PC-9 (cell line): ENCODE measurements at regions of chr3 and their contacts with region 1.

Region 1: DNA sequence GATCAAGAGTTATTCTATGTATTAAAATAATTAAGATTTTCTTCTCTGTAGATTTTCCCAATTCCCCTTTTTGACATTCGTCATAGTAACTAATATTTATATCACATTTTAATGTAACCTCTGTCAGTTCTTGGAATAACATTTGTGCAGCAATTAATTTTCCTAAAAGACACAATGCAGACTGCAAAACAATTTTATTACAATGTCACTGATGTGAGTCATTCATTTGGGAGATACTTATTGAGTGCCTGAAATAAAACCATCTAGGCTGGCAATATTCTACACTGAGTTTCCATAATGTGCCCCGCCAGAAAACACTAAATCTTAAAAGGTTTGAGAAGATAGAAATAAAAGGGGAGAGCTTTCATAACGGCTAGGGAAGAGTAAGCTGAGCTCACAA is 6.7 kb upstream of the USP13 start:
- DNase-seq: no peak
- H3K4me3 ChIP-seq: no peak overlapping the region
- H3K27ac ChIP-seq: no peak overlapping the region
- H3K4me1 ChIP-seq: peaks cover 15% of the 10 kb centered on the region
- H3K27me3 ChIP-seq: no peaks in the 10 kb centered on the region
- CTCF ChIP-seq: no peak

Region 2: DNA sequence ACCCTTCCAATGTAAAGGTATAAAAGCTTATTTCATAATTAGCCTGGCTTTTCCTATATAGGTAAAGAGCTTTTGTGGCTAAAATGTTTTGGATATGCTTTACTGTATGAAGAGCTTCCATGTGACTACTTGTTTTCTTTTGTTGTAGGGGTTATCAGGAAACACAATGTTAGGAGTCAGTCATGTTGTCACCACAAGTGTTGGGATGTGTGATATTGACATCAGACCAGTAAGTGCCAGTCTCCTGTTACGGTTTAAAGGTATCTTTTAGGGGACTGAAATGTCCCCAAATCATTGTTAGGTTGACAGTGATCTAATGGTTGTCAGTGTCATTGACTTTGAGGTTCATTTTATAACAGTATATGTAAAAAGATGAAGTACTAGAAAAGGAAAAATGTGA is 65.2 kb before region 1 on chr3:
- CTCF ChIA-PET with region 1: no interaction called
- POLR2A ChIA-PET with region 1: no interaction called
- intact Hi-C with region 1: no loop called
- DNase-seq: no peak
- H3K4me3 ChIP-seq: no peak overlapping the region
- H3K27ac ChIP-seq: no peak overlapping the region
- H3K4me1 ChIP-seq: no peaks in the 10 kb centered on the region
- H3K27me3 ChIP-seq: no peaks in the 10 kb centered on the region
- CTCF ChIP-seq: no peak

Region 3: DNA sequence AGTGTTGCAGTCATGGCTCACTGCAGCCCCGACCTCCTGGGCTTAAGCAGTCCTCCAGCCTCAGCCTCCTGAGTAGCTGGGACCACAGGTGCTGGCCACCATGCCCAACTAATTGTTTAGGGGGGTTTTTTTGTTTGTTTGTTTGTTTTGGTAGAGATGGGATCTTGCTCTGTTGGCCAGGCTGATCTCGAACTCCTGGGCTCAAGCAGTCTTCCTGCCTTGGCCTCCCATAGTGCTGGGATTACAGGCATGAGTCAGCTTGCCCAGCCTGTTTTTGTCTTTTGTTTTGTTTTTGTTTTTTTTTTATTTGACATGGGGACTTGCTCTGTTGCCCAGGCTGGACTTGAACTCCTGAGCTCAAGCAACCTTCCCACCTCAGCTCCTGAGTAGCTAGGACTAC is 24.2 kb before region 1 on chr3:
- CTCF ChIA-PET with region 1: interaction called, 4 read pairs
- POLR2A ChIA-PET with region 1: interaction called, 15 read pairs
- intact Hi-C with region 1: no loop called
- DNase-seq: no peak
- H3K4me3 ChIP-seq: no peak overlapping the region
- H3K27ac ChIP-seq: no peak overlapping the region
- H3K4me1 ChIP-seq: no peaks in the 10 kb centered on the region
- H3K27me3 ChIP-seq: no peaks in the 10 kb centered on the region
- CTCF ChIP-seq: no peak

Region 4: DNA sequence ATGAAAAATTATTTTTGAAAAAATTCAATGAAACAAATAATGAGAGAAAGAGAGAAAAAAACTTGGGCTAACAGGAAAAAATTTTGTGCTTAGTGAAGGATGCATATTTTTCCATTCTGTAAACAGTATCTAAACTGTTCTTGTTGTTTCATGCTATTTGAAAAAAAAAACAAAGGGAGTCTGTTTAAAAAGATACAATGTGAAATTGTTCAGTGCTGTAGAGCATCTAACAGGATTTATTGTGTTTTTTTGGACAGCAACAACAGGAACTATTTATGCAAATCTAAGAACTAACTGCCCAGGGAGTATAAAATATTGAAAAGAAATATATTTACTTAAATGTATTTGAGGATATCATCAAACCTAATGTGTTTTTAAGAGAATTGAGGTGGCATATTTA is 335.5 kb after region 1 on chr3:
- CTCF ChIA-PET with region 1: no interaction called
- POLR2A ChIA-PET with region 1: no interaction called
- intact Hi-C with region 1: no loop called
- DNase-seq: no peak
- H3K4me3 ChIP-seq: no peak overlapping the region
- H3K27ac ChIP-seq: no peak overlapping the region
- H3K4me1 ChIP-seq: no peaks in the 10 kb centered on the region
- H3K27me3 ChIP-seq: no peaks in the 10 kb centered on the region
- CTCF ChIP-seq: no peak

Region 5: DNA sequence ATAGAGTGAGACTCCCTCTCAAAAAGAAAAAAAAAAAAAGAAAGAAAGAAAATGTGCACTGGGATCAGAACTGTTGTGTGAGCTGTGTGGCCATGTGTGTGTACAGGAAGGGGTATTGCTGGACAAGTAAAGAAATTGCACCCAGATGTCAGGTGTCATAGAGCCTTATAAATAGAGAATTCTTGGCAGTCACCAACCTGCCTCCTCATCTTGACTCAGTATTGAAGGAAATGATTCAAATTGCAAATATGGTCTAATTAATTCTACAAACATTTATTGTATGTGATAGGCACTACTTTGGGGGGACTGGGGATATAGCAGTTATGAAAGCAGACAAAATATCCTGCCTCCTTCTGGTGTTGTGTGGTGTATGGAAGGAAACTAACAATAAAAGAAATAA is 712.0 kb after region 1 on chr3:
- CTCF ChIA-PET with region 1: no interaction called
- POLR2A ChIA-PET with region 1: no interaction called
- intact Hi-C with region 1: no loop called
- DNase-seq: no peak
- H3K4me3 ChIP-seq: no peak overlapping the region
- H3K27ac ChIP-seq: no peak overlapping the region
- H3K4me1 ChIP-seq: no peaks in the 10 kb centered on the region
- H3K27me3 ChIP-seq: no peaks in the 10 kb centered on the region
- CTCF ChIP-seq: no peak

Region 6: DNA sequence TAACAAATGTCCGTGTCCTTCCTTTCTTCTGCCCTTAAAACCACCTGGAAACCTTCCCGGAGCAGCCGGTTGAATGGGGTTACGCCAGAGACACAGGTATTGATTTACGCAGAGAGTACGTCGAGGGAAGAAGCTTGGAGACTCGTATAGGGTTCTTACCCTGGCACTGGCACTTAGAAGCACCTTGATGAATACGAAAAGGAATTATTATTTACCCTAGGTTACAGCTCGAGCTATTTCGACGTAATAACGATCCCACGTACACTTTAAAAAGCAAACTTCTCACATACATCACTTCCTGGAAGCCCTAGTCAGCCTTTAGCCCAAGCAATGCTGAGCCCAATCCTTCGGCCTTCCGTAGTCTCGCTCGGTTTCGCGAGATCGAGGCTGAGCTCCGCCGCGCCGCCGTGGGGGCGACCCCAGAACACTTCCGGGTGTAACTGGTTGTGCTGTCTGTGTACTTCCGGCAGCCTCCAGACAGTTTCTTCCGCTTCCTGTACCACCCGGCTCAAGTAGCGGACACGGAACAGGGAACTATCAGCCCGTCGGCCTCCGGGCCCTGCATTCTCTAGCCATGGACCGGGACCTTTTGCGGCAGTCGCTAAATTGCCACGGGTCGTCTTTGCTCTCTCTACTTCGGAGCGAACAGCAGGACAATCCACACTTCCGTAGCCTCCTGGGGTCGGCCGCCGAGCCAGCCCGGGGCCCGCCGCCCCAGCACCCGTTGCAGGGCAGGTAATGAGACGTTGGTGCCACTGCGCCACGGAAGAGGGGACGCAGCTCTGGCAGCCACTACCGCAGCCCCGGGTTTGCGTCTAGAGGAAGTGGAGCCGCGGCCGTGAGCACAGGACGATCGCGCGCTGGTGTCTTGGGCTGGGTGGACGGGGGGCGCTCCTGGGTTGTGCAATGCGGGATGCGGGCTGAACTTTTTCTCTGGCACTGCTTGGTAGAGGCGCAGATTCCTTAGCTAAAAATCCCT is 955.8 kb after region 1 on chr3 and contains the start of gene TTC14:
- CTCF ChIA-PET with region 1: interaction called, 3 read pairs
- POLR2A ChIA-PET with region 1: no interaction called
- intact Hi-C with region 1: loop called (anchors 1 kb)
- DNase-seq: peak; percentile 93 to 97
- H3K4me3 ChIP-seq: peak within 1 kb of the TSS; percentile 74
- H3K27ac ChIP-seq: peak within 1 kb of the TSS; percentile 77
- H3K4me1 ChIP-seq: peaks cover 18% of the 10 kb centered on the region
- H3K27me3 ChIP-seq: no peaks in the 10 kb centered on the region
- CTCF ChIP-seq: no peak
- total RNA-seq, gene TTC14: 51.1 and 55.4 TPM in 2 replicates